AG04449 (cell line): ENCODE measurements at regions of chr5 and their contacts with region 1.

Region 1: GRCh38 chr5:74640450-74640953 is at the start of gene ENC1:
- DNase-seq: no peak
- H3K4me3 ChIP-seq: peak within 1 kb of the TSS; percentile 96
- CTCF ChIP-seq: peak; percentile 79

Region 2: DNA sequence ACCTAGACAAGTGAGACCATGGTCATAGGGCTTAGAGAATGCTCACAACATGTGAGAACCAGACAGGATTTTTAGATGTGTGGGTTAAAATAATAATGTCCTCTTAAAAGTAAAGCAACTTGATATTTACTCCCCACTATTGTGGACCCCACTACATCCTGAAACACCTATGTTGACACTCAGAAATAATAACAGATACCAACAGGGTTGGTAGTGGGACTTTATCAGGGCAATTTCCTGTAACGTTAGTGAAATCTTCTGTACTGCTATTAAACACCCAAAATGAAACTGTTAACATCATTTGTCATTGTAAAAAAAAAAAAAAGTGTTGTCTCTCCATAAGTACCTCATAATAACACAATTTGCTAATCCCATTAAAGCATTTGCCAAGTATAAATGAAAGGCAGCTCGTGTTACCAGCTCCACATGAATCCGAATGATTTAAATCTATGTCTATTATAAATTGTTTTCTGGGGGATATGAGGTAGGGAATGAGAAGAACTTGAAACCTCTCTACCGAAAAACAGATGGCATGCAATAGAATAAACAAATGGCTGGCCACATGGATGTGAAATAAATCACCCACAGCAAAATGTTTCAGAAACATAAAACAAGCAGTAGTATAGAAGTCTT is 728.6 kb before region 1 on chr5:
- CTCF ChIA-PET with region 1: interaction called, 40 read pairs
- POLR2A ChIA-PET with region 1: interaction called, 4 read pairs
- DNase-seq: no peak
- H3K4me3 ChIP-seq: no peak overlapping the region
- CTCF ChIP-seq: no peak

Region 3: GRCh38 chr5:74035521-74035981 is 605.0 kb before region 1 on chr5:
- CTCF ChIA-PET with region 1: interaction called, 15 read pairs
- POLR2A ChIA-PET with region 1: no interaction called
- DNase-seq: no peak
- H3K4me3 ChIP-seq: no peak overlapping the region
- CTCF ChIP-seq: peak; percentile 42

Region 4: DNA sequence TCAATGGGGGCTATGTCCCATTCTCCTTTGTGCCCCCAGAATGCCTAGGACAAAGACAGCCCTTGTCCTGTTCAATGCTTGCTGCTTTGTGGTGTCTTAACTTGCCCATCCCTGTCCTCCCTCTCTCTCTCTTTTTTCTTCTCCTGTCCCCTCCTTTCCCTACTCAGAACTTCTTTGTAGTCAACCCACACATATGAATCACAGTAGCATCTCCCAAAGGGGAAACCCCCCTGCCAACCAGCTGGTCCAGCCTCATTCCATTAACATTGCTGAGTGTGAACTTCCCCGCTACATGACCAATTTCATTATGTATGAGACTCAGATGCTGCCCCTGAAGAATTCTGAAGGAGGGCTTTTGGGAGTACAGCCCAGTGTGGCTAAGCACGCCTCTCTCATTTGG is 408.2 kb before region 1 on chr5:
- CTCF ChIA-PET with region 1: no interaction called
- POLR2A ChIA-PET with region 1: interaction called, 11 read pairs
- DNase-seq: peak; percentile 83
- H3K4me3 ChIP-seq: no peak overlapping the region
- CTCF ChIP-seq: no peak

Region 5: DNA sequence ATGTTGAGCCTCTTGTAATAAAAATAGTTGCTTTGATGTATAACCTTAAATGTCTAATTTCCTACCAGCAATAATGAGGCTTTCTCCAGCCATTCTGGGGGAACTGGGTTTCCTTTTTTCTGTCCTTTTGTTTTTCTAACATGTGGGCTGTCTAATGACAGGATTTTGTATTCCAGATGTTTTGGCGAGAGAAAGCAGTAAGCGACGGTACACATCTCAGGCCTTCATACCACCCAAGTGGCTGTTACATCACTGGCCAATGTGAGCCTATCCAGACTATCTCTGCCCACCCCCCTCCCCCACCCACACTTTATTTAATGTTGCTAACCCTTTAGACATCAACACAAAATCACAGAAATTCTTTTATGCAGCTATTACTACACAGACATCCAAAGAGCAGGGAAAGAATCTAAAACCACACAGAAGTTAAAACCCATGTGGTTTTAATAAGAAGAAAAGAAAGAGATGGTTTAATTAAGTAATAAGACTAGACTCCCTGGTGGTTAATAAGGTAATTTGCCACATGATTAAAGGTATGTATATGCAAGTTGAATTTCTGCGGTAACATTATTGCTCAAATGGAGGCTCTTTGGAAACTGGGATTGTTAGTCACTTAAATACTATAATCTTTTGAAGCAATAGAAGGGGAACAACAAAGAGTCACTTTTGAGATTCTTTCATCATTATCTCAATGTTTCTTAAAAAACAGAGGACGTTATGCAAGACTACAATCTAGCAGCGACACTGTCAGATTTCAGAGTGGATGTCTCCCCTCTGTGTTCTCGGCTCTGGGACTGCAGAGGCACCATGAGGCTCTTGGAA is 365.1 kb before region 1 on chr5:
- CTCF ChIA-PET with region 1: interaction called, 3 read pairs
- POLR2A ChIA-PET with region 1: interaction called, 11 read pairs
- DNase-seq: peak; percentile 71
- H3K4me3 ChIP-seq: no peak overlapping the region
- CTCF ChIP-seq: no peak